ENCODE measurements at regions of chr18 and their contacts with region 1.

Region 1: GRCh38 chr18:5546660-5547059 is 2.9 kb upstream of the EPB41L3 start:
- DNase-seq: no peak
- ATAC-seq: peak; percentile 46

Region 2: DNA sequence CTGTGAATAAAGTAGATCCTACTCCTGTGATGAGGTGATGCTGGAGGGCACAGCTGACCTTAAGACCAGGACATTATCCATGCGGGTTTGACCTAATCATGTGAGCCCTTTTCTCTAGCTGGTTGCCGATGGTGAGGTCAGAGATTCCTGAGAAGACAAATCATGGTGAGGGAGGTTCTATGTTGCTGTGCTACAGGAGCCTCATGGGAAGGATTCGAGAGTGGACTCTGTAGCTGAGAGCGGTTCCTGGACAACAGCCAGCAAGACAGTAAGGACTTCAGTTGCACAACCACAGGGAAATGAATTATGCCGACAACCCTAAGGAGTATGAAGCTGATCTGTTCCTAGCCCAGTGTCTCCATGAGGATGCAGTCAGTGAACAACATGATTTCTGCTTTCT is 83.3 kb before region 1 on chr18:
- intact Hi-C with region 1: loop called (anchors 10 kb)
- DNase-seq: peak; percentile 78
- ATAC-seq: peak; percentile 89

Region 3: GRCh38 chr18:5500158-5500939 is 46.3 kb before region 1 on chr18:
- intact Hi-C with region 1: no loop called
- DNase-seq: no peak
- ATAC-seq: no peak

Region 4: DNA sequence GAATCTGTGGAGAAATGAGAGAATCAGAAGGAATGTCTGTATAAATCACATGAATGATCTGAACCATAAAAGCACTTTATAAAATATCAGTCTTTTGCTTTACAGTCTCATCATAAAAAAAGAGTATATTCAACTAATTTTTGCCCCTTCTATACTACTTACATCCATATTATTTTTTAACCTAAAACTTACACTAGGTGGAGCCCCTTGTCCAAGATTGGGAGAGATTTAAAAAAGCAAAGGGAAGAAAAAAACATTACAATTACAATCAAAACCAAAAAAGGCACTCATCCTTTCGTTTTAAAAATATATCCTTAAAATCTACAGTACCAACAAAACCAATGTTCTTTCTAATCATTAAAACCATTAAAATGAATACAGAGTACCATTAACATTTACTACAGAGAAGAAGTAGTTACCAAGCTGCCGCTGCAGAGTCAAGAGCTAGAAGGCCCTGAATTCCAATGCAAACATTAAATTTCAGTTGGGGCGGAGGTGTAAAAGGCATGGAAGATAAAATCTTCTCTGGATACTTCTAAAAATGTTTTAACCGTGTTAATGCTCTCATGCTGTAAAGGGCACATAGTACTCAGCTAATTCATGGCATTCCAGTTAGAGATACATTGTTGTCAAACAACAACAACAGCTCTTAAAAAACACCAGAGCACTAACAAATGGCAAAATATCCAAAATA is 53.9 kb after region 1 on chr18:
- intact Hi-C with region 1: no loop called
- DNase-seq: no peak
- ATAC-seq: no peak

Region 5: GRCh38 chr18:5678779-5679406 is 132.2 kb after region 1 on chr18:
- intact Hi-C with region 1: no loop called
- DNase-seq: no peak
- ATAC-seq: no peak

Region 6: DNA sequence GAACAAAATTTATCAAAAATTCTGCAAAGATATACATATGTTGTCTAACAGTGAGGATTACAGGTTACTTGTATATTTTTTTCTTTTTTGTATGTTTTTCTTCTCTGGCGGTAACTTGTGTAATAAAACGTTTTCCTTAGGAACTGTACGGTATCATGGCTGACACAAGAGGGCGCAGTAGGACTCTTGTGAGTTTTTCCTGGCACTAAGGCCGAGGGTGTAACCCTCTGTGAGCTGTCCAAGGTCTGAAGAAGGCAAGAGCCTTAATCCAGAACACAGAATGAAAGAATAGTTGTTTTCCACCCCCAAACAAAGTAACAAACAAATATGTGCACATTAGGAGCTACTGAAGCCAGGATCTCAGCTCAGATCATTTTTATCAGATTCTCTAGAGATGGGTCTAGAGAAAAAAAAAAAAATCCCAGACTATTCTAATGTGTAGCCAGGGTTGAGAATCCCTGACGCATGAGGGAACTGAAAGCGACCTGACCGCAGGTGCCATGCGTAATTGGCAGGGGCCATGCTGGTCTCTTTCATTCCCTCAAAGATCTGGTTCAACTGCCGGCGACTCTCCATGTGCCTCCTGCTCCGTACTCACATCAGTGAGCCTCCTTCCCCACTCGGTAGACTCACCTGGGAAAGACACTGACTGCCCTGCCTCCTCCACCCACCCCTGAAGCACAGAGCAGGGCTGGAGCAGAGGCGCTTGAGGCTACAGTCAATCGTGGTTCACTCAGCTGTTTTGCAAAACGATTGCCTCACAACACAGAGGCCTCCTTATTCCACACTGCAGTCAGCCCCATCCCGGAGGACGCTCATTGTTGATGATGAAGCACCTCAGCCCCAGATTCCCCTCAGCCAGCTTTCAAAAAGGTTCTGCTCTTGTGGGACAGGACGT is 321.8 kb after region 1 on chr18:
- intact Hi-C with region 1: no loop called
- DNase-seq: peak; percentile 48
- ATAC-seq: peak; percentile 90